GM12878 (cell line): ENCODE measurements at regions of chr3 and their contacts with region 1.

Region 1: DNA sequence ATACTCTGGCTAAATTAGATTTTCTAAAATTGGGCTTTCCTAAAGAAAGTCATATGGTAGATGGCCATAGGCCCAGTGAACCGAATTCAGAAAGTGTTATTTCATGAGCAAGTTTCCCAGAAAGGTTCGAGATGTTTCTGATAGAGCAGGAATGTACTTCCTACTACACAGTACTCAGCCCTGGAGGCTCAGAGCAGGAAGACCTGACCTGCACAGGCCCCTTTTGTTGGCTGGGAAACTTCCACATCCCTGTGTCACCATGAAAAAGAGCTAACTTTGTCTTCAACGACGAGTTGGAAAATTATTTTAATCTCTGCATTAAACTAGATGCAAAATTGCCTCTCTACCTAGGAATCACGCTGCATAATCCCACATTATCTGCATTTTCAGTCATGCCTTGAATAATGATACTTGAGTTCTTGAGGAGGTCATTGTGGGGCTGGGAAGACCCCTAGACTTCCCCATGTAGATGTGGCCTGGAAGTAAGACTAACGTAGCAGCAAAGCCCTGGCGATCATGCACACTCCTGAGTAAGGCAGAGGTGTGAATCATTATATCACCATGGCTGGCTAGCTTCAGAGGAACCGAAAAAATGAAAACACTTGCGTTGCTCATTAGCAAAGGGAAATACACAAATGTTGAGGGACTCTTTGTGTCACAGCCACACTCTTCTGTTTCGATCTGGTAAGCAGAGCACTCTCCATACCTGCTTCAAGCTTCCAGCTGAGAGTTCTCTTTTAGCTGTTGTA is 47.1 kb downstream of the CMTM7 start:
- DNase-seq: peak; percentile 92
- ATAC-seq: peak; percentile 89
- H3K4me3 ChIP-seq: no peak overlapping the region
- H3K27ac ChIP-seq: peak overlapping the region; percentile 38
- H3K4me1 ChIP-seq: peaks cover 56% of the 10 kb centered on the region
- H3K27me3 ChIP-seq: no peaks in the 10 kb centered on the region
- CTCF ChIP-seq: no peak
- EP300 ChIP-seq: peak; percentile 96 to 99
- POLR2A ChIP-seq: no peak
- RAD21 ChIP-seq: no peak

Region 2: GRCh38 chr3:32391643-32392535 is 46.9 kb before region 1 on chr3 and contains the start of gene CMTM7:
- CTCF ChIA-PET with region 1: interaction called, 5 read pairs
- POLR2A ChIA-PET with region 1: interaction called, 6 read pairs
- RAD21 ChIA-PET with region 1: interaction called, 10 read pairs
- SMC1A ChIA-PET with region 1: interaction called, 16 read pairs
- in situ Hi-C with region 1: no loop called
- intact Hi-C with region 1: loop called (anchors 2 kb)
- DNase-seq: no peak
- ATAC-seq: peak; percentile 79
- H3K4me3 ChIP-seq: peak within 1 kb of the TSS; percentile 68
- H3K27ac ChIP-seq: no peak within 1 kb of the TSS
- H3K4me1 ChIP-seq: peaks cover 4% of the 10 kb centered on the region
- H3K27me3 ChIP-seq: peaks cover 0 to 4% of the 10 kb centered on the region in 2 experiments; a peak in 2 of 4 replicates
- CTCF ChIP-seq: no peak
- EP300 ChIP-seq: no peak
- POLR2A ChIP-seq: no peak
- RAD21 ChIP-seq: no peak
- polyA plus RNA-seq, gene CMTM7: 3.7 to 12.0 TPM

Region 3: GRCh38 chr3:32414520-32415202 is 24.1 kb before region 1 on chr3:
- CTCF ChIA-PET with region 1: interaction called, 12 read pairs
- POLR2A ChIA-PET with region 1: interaction called, 158 read pairs
- RAD21 ChIA-PET with region 1: interaction called, 187 read pairs
- SMC1A ChIA-PET with region 1: interaction called, 307 read pairs
- in situ Hi-C with region 1: no loop called
- intact Hi-C with region 1: no loop called
- DNase-seq: no peak
- ATAC-seq: peak; percentile 85
- H3K4me3 ChIP-seq: no peak overlapping the region
- H3K27ac ChIP-seq: no peak overlapping the region
- H3K4me1 ChIP-seq: peaks cover 3% of the 10 kb centered on the region
- H3K27me3 ChIP-seq: no peaks in the 10 kb centered on the region
- CTCF ChIP-seq: no peak
- EP300 ChIP-seq: no peak
- POLR2A ChIP-seq: no peak
- RAD21 ChIP-seq: no peak

Region 4: DNA sequence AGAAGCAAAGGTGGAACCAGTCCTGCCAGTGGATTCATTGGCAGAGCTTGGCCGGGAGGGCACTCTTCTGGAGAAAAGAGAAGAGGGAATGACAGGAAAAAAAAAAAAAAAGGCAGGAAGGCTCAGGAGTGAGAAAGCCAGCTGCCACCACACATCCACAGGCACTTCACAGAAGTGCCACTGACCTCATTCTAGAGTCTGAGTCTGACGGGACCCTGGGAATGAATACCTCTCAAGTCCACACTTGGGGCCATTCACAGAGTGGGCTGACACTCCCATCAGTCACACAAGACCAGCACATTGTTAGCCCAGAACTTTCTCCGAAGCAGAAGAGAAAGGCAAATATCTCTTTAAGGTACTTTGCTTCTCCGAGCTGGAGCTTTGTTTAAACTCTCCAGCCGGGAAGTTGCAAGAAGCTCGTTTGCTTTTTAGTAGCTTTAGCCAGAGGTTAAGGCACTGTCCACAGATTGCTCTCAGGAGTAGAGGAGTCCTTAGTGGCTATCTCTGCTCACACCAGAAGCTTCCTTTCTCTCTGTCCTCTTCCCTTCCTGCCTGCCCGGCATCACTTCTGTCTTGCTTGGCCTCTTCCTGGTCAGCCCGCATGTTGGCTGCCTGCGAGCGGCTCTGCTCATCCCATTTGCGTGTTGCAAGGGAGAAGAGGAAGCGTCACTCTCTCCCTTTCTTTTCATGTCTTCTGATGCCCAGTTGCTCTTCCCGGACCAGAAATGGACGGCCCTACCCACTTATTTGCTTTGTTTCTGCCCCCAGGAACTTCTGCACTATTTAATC is 10.1 kb after region 1 on chr3:
- CTCF ChIA-PET with region 1: interaction called, 41 read pairs
- POLR2A ChIA-PET with region 1: interaction called, 10 read pairs
- RAD21 ChIA-PET with region 1: interaction called, 66 read pairs
- SMC1A ChIA-PET with region 1: interaction called, 119 read pairs
- in situ Hi-C with region 1: no loop called
- intact Hi-C with region 1: no loop called
- DNase-seq: no peak
- ATAC-seq: no peak
- H3K4me3 ChIP-seq: no peak overlapping the region
- H3K27ac ChIP-seq: no peak overlapping the region
- H3K4me1 ChIP-seq: no peaks in the 10 kb centered on the region
- H3K27me3 ChIP-seq: peaks cover 0 to 3% of the 10 kb centered on the region in 2 experiments; a peak in 2 of 4 replicates
- CTCF ChIP-seq: no peak
- EP300 ChIP-seq: no peak
- POLR2A ChIP-seq: no peak
- RAD21 ChIP-seq: no peak

Region 5: GRCh38 chr3:32493437-32494414 is 55.0 kb after region 1 on chr3:
- CTCF ChIA-PET with region 1: interaction called, 5 read pairs
- POLR2A ChIA-PET with region 1: no interaction called
- RAD21 ChIA-PET with region 1: interaction called, 4 read pairs
- SMC1A ChIA-PET with region 1: interaction called, 6 read pairs
- in situ Hi-C with region 1: no loop called
- intact Hi-C with region 1: loop called (anchors 2 kb)
- DNase-seq: no peak
- ATAC-seq: peak; percentile 77
- H3K4me3 ChIP-seq: 0 out of 2 replicates have a peak overlapping the region, but pooled peaks have one; percentile 13
- H3K27ac ChIP-seq: no peak overlapping the region; the same call in 1 of the 2 replicates
- H3K4me1 ChIP-seq: peaks cover 23% of the 10 kb centered on the region
- H3K27me3 ChIP-seq: no peaks in the 10 kb centered on the region
- CTCF ChIP-seq: no peak
- EP300 ChIP-seq: peak; percentile 74 to 83; a peak in 3 of 4 replicates
- POLR2A ChIP-seq: no peak
- RAD21 ChIP-seq: no peak

Region 6: GRCh38 chr3:32614956-32615355 is 176.2 kb after region 1 on chr3:
- CTCF ChIA-PET with region 1: no interaction called
- POLR2A ChIA-PET with region 1: no interaction called
- RAD21 ChIA-PET with region 1: no interaction called
- SMC1A ChIA-PET with region 1: no interaction called
- in situ Hi-C with region 1: no loop called
- intact Hi-C with region 1: no loop called
- DNase-seq: no peak
- ATAC-seq: no peak
- H3K4me3 ChIP-seq: no peak overlapping the region
- H3K27ac ChIP-seq: no peak overlapping the region
- H3K4me1 ChIP-seq: no peaks in the 10 kb centered on the region
- H3K27me3 ChIP-seq: no peaks in the 10 kb centered on the region
- CTCF ChIP-seq: no peak
- EP300 ChIP-seq: no peak
- POLR2A ChIP-seq: no peak
- RAD21 ChIP-seq: no peak

Region 7: DNA sequence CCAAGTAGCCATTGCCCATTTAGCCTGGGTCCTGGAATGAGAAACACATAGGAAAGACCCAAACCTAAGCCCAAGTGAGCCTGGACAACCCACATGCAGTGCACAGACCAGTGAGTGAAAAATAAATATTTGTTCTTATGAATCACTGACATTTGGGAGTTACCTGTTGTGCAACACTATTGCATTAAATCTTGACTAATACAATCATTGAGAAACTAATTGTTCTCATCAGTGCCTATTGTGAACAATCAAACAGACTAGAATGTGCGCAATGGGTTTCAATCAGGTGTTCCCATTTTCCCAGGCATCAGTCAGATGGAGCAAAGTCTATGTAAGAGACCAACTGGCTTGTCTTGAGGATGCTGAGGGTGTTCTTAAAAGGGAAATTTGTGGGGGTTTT is 191.5 kb after region 1 on chr3:
- CTCF ChIA-PET with region 1: no interaction called
- POLR2A ChIA-PET with region 1: no interaction called
- RAD21 ChIA-PET with region 1: no interaction called
- SMC1A ChIA-PET with region 1: no interaction called
- in situ Hi-C with region 1: no loop called
- intact Hi-C with region 1: no loop called
- DNase-seq: no peak
- ATAC-seq: no peak
- H3K4me3 ChIP-seq: no peak overlapping the region
- H3K27ac ChIP-seq: no peak overlapping the region
- H3K4me1 ChIP-seq: no peaks in the 10 kb centered on the region
- H3K27me3 ChIP-seq: no peaks in the 10 kb centered on the region; a peak in 1 of 4 replicates
- CTCF ChIP-seq: no peak
- EP300 ChIP-seq: no peak
- POLR2A ChIP-seq: no peak
- RAD21 ChIP-seq: no peak